ENCODE measurements at regions of chr1 and their contacts with region 1.

Region 1: GRCh38 chr1:1040004-1040991 is 20.4 kb downstream of the AGRN start:
- DNase-seq: peak; percentile 61
- H3K4me3 ChIP-seq: no peak overlapping the region
- H3K27ac ChIP-seq: no peak overlapping the region
- H3K4me1 ChIP-seq: peaks cover 6% of the 10 kb centered on the region
- H3K27me3 ChIP-seq: no peaks in the 10 kb centered on the region
- CTCF ChIP-seq: no peak

Region 2: DNA sequence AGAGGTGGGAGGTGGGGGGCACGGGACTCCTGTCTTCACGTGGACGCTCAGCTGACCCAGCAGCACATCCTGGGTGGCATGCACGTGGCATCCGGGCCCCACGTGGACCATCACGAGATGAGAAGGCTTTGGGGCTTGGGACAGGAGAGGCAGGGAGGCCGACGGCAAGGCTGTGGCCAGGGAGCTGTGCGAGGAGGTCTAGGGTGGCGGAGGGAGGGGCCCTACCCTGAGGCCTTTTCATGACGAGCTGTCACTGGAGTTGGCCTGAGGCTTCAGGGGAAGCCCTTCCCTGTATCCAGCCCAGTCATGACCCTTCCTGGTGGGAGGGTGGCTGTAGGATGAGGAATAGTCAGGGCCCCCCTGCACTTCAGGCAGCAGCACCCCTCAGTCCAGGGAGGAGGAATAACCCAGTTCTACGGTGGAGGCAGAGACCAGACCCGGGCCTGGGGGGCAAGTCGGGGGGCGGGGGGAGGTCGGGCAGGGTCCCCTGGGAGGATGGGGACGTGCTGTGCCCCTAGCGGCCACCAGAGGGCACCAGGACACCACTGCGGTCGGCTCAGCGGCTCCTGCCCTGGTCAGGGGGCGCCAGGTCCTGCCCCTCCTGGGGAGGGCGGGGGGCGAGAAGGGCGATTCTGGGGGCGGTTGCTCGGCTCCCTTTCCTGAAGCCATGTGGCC is 56.4 kb before region 1 on chr1:
- CTCF ChIA-PET with region 1: interaction called, 14 read pairs
- dilution Hi-C with region 1: no loop called
- in situ Hi-C with region 1: no loop called
- intact Hi-C with region 1: no loop called
- DNase-seq: no peak
- H3K4me3 ChIP-seq: no peak overlapping the region
- H3K27ac ChIP-seq: no peak overlapping the region
- H3K4me1 ChIP-seq: no peaks in the 10 kb centered on the region
- H3K27me3 ChIP-seq: peaks cover 2% of the 10 kb centered on the region
- CTCF ChIP-seq: peak; percentile 28 to 86

Region 3: GRCh38 chr1:1024771-1025451 is 15.4 kb before region 1 on chr1:
- CTCF ChIA-PET with region 1: no interaction called
- dilution Hi-C with region 1: no loop called
- in situ Hi-C with region 1: no loop called
- intact Hi-C with region 1: loop called (anchors 2 kb)
- DNase-seq: peak; percentile 77
- H3K4me3 ChIP-seq: peak overlapping the region; percentile 40 to 56 (median 49)
- H3K27ac ChIP-seq: peak overlapping the region; percentile 47
- H3K4me1 ChIP-seq: peaks cover 57% of the 10 kb centered on the region
- H3K27me3 ChIP-seq: no peaks in the 10 kb centered on the region
- CTCF ChIP-seq: no peak